A673 (cell line): ENCODE measurements at regions of chr16 and their contacts with region 1.

Region 1: GRCh38 chr16:30698139-30698815 is 694 bp upstream of the SRCAP start:
- DNase-seq: peak; percentile 99
- H3K4me3 ChIP-seq: peak overlapping the region; percentile 96
- H3K27ac ChIP-seq: peak overlapping the region; percentile 100
- H3K4me1 ChIP-seq: peaks cover 20% of the 10 kb centered on the region
- H3K27me3 ChIP-seq: no peaks in the 10 kb centered on the region
- CTCF ChIP-seq: no peak

Region 2: DNA sequence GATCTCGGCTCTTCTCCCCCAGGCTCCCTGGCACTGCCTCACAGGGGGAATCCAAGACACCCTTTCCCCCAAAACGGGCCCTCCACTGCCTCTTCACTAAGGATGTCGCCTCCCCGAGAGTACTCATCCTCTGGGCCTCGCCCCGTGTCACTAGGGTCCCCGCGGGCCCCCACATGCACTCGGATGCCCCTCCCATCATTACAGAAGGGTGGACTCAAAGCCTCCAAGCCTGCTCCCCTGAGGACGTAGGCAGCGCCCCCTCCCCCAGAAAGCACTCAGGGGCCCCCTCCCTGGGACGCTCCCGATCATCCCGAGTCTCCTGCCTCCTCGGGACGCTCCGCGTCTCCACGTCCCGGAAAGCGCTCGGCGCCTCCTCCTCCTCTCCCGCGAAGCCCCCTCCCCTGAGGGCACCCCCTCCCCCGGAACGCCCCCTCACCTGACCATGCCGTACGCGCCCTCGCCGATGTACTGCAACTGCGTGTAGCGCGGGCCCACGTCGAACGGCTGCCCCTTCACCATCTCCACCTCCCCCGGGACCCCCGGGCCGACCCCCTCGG is 575.6 kb before region 1 on chr16:
- CTCF ChIA-PET with region 1: no interaction called
- POLR2A ChIA-PET with region 1: interaction called, 17 read pairs
- intact Hi-C with region 1: no loop called
- DNase-seq: peak; percentile 23
- H3K4me3 ChIP-seq: peak overlapping the region; percentile 90
- H3K27ac ChIP-seq: peak overlapping the region; percentile 74
- H3K4me1 ChIP-seq: peaks cover 4% of the 10 kb centered on the region
- H3K27me3 ChIP-seq: no peaks in the 10 kb centered on the region
- CTCF ChIP-seq: no peak

Region 3: GRCh38 chr16:30657866-30658730 is 40.2 kb before region 1 on chr16 and contains the start of gene FBRS:
- CTCF ChIA-PET with region 1: no interaction called
- POLR2A ChIA-PET with region 1: no interaction called
- intact Hi-C with region 1: loop called (anchors 2 kb)
- DNase-seq: peak; percentile 100
- H3K4me3 ChIP-seq: peak within 1 kb of the TSS; percentile 81
- H3K27ac ChIP-seq: peak within 1 kb of the TSS; percentile 99
- H3K4me1 ChIP-seq: peaks cover 19% of the 10 kb centered on the region
- H3K27me3 ChIP-seq: no peaks in the 10 kb centered on the region
- CTCF ChIP-seq: peak; percentile 94
- total RNA-seq, gene FBRS: 71.2 and 79.9 TPM in 2 replicates